Endothelial cell of umbilical vein (primary cell): ENCODE measurements at regions of chr13 and their contacts with region 1.

Region 1: GRCh38 chr13:50170447-50171037 is 155.3 kb downstream of the KCNRG start:
- DNase-seq: peak; percentile 69
- H3K4me3 ChIP-seq: no peak overlapping the region
- H3K27ac ChIP-seq: no peak overlapping the region
- H3K4me1 ChIP-seq: no peaks in the 10 kb centered on the region
- H3K27me3 ChIP-seq: no peaks in the 10 kb centered on the region
- CTCF ChIP-seq: peak; percentile 8 to 24
- POLR2A ChIP-seq: no peak

Region 2: GRCh38 chr13:50131920-50132903 is 38.3 kb before region 1 on chr13:
- CTCF ChIA-PET with region 1: no interaction called
- POLR2A ChIA-PET with region 1: no interaction called
- dilution Hi-C with region 1: no loop called
- intact Hi-C with region 1: no loop called
- DNase-seq: no peak
- H3K4me3 ChIP-seq: no peak overlapping the region
- H3K27ac ChIP-seq: no peak overlapping the region
- H3K4me1 ChIP-seq: peaks cover 9% of the 10 kb centered on the region
- H3K27me3 ChIP-seq: peaks cover 39 to 43% of the 10 kb centered on the region in 2 experiments
- CTCF ChIP-seq: no peak
- POLR2A ChIP-seq: no peak

Region 3: GRCh38 chr13:50512474-50513299 is 342.1 kb after region 1 on chr13:
- CTCF ChIA-PET with region 1: interaction called, 10 read pairs
- POLR2A ChIA-PET with region 1: no interaction called
- dilution Hi-C with region 1: no loop called
- intact Hi-C with region 1: no loop called
- DNase-seq: peak; percentile 55
- H3K4me3 ChIP-seq: no peak overlapping the region
- H3K27ac ChIP-seq: no peak overlapping the region
- H3K4me1 ChIP-seq: no peaks in the 10 kb centered on the region
- H3K27me3 ChIP-seq: no peaks in the 10 kb centered on the region
- CTCF ChIP-seq: no peak
- POLR2A ChIP-seq: no peak

Region 4: DNA sequence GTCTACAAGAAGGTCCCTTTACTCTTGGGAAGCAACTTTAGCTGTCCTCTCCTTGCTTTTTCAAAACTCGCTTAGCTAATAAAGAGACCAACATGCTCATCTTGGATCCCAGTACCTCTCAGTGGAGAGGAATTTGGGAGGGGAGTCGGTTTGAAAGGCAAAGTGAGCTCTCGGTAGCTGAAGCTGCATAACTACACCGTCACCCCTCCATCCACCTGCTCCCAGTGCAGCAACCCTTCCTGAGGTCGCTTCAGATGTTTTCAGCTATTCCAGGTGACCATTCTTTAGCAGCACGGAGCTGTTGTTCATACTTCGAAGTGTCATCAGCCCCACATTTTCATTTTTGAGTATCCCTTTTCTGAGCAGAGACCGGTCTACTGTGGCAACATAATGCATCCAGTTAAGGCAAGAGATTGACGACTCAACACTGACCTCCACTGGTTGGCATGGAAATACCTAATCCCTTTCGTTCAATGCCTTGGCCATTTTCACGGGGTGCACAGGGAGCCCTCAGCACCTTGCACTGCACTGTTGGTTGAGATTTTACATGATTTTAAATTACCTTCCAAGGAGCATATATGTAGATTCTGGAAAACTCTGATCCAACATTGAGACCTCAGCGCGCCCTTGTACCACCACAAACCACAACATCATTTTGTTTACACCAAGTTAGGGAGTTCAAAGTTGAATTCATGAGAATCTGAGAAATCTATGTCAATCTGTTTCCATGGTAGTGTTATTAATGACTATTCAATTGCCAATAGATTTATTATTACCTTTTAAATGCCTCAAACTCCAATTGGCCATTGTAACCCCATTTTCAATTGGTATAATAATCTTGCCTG is 630.8 kb after region 1 on chr13:
- CTCF ChIA-PET with region 1: interaction called, 12 read pairs
- POLR2A ChIA-PET with region 1: no interaction called
- dilution Hi-C with region 1: no loop called
- intact Hi-C with region 1: loop called (anchors 1 kb)
- DNase-seq: peak; percentile 75
- H3K4me3 ChIP-seq: no peak overlapping the region
- H3K27ac ChIP-seq: no peak overlapping the region
- H3K4me1 ChIP-seq: peaks cover 4% of the 10 kb centered on the region
- H3K27me3 ChIP-seq: no peaks in the 10 kb centered on the region
- CTCF ChIP-seq: peak; percentile 71 to 72
- POLR2A ChIP-seq: no peak